ENCODE measurements at regions of chr12 and their contacts with region 1.

Region 1: DNA sequence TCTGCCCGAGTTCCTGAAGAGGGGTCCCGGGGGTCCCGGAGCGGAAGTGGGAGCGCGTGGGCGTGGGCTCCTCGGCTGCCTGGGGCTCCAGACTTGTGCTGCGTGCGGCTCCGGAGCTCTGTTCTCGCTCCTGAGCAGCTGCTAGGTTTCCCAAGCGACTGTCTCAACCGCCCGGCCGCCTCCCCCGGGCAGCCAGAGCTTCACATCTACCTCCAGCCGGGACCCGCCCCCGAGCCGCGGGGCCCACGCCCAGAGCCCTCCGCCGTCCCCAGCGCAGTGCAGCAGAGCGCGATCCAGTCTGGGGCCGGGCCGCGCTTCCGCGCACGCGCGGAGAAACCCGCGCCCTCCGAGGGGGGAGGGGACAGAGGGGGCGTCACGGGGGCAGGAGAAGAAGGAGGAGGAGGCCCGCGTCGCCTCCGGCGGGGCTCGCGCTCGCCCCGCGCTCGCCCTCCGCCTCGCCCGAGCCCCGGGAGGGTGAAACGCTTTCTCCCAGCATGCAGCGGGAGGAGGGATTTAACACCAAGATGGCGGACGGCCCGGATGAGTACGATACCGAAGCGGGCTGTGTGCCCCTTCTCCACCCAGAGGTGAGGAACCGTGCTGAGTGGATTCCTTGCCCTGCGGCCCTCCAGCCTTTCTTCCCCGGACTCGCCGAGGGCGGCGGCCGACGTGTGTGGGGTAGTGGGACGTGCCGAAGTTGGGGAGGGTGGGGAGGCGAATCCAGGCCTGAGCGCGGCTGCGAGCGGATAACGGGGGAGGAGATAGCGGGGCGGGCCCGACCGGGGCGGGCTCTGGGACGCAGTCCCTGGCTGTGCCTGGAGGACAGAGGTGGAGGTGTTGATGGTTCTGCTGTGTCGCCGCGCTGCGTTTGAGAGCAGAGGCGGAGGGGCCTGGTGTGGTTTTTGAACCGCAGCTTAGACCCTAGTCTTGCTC is at the start of gene ZDHHC17:
- DNase-seq: peak; percentile 66 to 93
- H3K4me3 ChIP-seq: peak within 1 kb of the TSS; percentile 67 to 87
- H3K27ac ChIP-seq: peak within 1 kb of the TSS; percentile 95 to 96
- H3K4me1 ChIP-seq: peaks cover 0 to 3% of the 10 kb centered on the region in 2 donors
- H3K27me3 ChIP-seq: no peaks in the 10 kb centered on the region
- CTCF ChIP-seq: no peak
- total RNA-seq, gene ZDHHC17: 24.3 TPM

Region 2: DNA sequence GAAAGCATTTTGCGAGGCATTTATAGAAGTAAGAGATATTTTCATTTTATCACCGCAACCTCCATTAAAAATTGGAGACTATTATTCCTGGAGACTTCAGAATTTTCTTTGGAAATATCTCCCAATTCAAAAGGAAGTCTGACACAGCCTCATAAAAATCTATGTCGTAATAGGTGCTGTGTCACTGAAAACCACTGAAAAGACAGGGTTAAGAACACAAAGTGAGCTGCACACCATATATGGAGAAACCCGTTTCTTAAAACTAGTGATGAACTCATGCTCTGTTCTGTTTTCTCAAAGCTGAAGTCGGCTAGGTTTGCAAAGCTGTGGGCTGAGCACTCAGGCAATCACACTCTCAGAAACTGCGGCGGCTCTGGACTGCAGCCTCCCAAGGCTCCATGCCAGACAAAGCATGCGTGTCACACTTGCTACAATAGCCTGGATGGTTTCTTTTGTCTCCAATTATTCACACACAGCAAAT is 1283.5 kb before region 1 on chr12 and contains the start of gene GLIPR1:
- intact Hi-C with region 1: loop called (anchors 5 kb)
- DNase-seq: peak; percentile 52 to 94
- H3K4me3 ChIP-seq: peak within 1 kb of the TSS; percentile 66 to 75
- H3K27ac ChIP-seq: peak within 1 kb of the TSS; percentile 88 to 90
- H3K4me1 ChIP-seq: peaks cover 5 to 14% of the 10 kb centered on the region in 2 donors
- H3K27me3 ChIP-seq: no peaks in the 10 kb centered on the region
- CTCF ChIP-seq: no peak
- total RNA-seq, gene GLIPR1: 43.9 TPM

Region 3: DNA sequence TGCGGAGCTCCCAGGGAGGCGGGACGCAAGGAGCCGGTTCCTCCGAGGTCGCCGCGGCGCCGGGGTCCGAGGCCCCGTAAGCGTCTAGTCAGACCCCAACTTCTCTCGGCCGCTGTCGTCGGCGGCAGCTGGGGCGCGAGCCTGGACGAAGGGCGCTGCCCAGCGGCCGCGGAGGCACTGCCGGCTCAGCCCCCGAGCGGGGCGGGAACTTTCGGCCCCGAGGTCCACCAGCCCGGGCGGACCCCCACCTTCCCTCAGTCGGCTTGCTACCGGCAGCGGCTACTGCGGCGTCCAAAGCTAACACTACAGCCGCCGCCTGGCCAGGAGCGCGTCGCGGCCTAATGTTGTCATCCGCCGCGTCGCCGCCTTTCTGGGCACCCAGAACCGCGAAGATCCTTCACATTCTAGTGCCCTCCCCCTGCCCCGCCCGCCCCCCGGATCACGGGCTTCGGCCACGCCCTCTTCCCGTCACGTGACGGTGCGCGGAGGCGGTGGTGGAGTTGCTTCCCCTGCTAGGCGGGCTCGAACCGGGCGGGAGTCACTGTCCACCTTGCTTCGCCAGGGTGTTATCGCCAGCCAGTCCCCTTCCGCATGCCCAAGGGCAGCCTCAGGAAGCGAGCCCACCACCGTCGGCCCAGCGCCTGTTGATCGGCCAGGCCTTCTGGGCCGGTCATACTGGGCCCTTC is 204.5 kb before region 1 on chr12 and contains the start of gene OSBPL8:
- intact Hi-C with region 1: loop called (anchors 1 kb)
- DNase-seq: peak; percentile 93 to 99
- H3K4me3 ChIP-seq: peak within 1 kb of the TSS; percentile 71 to 89
- H3K27ac ChIP-seq: peak within 1 kb of the TSS; percentile 91 to 95
- H3K4me1 ChIP-seq: peaks cover 4 to 9% of the 10 kb centered on the region in 2 donors
- H3K27me3 ChIP-seq: no peaks in the 10 kb centered on the region
- CTCF ChIP-seq: peak; percentile 9 to 44 (median 16)
- total RNA-seq, gene OSBPL8: 18.6 TPM

Region 4: DNA sequence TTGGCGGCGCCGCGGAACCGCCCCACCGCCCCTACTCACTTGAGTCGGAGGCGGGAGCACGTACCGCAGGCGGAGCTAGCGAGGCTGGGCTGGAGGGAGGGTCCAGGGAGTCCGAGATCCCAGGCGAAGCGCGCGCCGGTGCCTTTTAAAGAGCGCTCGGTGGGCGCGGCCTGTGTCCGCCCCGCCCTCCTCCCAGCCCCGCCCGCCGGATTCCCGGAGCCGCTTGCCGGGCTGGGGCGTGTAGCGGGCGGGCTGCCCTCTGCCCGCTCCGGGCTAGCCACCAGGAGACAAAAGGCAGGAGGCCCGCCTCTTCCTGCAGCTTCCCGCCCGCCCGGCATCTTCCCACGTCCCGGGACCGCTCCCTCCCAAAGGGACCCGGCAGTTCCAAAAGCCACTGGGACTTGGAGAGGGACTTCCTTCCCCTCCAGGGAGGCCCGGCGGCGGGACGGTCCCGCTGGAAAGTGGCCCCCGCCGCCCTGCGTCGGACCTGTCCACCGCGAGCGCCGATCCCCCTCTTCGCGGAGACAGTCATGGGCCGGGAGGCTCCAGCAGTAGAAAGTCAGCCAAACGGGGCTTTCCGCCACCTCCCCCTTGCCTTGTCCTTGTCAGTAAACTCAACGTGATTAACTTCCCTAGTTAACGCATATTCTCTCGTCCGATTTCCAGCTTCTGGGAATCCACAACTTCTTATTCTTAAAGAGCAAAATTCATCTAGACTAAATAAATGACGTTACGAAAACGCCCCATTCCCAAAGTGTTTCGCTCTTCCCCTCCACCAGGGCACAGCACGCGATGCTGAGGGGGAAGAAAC is 115.1 kb after region 1 on chr12 and contains the start of gene CSRP2:
- intact Hi-C with region 1: loop called (anchors 2 kb)
- DNase-seq: peak; percentile 83 to 96
- H3K4me3 ChIP-seq: peak within 1 kb of the TSS; percentile 70 to 76
- H3K27ac ChIP-seq: peak within 1 kb of the TSS; percentile 94 to 98
- H3K4me1 ChIP-seq: peaks cover 0 to 33% of the 10 kb centered on the region in 2 donors
- H3K27me3 ChIP-seq: no peaks in the 10 kb centered on the region
- CTCF ChIP-seq: peak; percentile 18 to 36 (median 30)
- total RNA-seq, gene CSRP2: 59.7 TPM